ENCODE measurements at regions of chr7 and their contacts with region 1.

Region 1: DNA sequence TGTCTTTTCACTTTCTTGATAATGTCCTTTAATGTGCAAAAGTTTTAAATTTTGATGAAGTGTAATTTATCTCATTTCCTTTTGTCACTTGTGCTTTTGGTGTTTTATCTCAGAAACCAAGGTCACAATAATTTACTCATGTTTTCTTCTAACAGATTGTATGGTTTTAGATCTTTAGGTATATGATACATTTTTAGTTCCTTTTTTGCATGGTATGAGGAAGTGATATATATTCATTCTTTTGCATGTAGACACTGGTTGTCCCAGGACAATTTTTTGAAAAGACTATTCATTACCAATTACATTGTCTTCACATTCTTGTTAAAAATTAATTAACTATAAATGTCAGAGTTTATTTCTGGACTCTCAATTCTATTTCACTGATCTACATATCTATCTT is 39.8 kb upstream of the GPR22 start:
- DNase-seq: no peak

Region 2: GRCh38 chr7:107480932-107481331 is 50.9 kb after region 1 on chr7:
- intact Hi-C with region 1: no loop called
- DNase-seq: no peak

Region 3: GRCh38 chr7:107506613-107507339 is 76.7 kb after region 1 on chr7:
- intact Hi-C with region 1: loop called in 1 of 2 experiments (anchors 2 kb)
- DNase-seq: peak; percentile 81

Measured in posterior vena cava (tissue), 2 donors.